HAP-1 (cell line): ENCODE measurements at regions of chr3 and their contacts with region 1.

Region 1: GRCh38 chr3:154095832-154096421 is 25.3 kb upstream of the ARHGEF26 start:
- DNase-seq: peak in 1 of 2 experiments; percentile 8
- H3K4me3 ChIP-seq: no peak overlapping the region
- H3K4me1 ChIP-seq: no peaks in the 10 kb centered on the region
- H3K27me3 ChIP-seq: no peaks in the 10 kb centered on the region

Region 2: DNA sequence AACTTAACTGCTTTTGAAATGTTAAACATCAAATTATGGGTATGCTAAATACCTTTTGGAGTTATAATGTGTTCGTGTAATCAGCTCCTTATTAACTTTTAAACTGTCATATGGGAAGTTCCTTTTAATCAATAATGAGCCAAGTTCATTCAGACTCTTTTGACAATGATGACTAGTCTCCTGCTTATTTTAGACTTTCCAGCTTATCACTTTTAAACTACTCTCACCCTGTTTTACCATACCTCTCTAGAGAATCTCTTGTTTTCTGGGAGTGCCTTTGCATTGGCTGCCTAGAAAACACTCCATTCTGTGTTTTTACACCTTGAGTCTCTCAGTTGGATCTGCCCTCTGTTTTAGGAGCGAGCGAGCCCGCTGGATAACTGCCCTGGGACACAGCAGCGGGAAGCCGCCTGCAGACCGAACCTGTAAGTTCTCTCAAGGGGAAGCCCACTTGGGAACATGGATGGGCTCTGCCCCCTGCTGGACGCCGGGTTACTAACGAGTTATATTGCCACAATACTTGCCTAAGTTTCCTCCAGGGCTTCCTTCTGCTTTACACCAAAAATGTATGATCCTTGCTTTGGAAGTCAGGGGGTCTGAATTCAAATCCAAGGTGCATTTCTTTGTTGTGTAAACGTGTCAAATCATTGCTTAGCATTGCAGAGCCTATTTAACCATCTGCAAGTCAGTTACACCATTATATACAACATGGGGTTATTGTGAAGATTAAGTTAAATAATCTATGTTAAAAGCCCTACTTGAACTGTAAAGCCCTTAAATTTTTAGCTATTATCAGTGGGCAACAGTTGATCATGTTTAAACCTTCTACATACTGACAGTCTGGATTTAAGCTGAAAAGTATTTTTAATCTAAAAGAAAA is 157.1 kb after region 1 on chr3:
- in situ Hi-C with region 1: loop called (anchors 10 kb)
- DNase-seq: peak; percentile 62 to 94
- H3K4me3 ChIP-seq: no peak overlapping the region
- H3K4me1 ChIP-seq: peaks cover 11% of the 10 kb centered on the region
- H3K27me3 ChIP-seq: no peaks in the 10 kb centered on the region